AG04450 (cell line): ENCODE measurements at regions of chr1 and their contacts with region 1.

Region 1: GRCh38 chr1:78114034-78114956 is 68.5 kb downstream of the GIPC2 start:
- DNase-seq: peak; percentile 53
- H3K4me3 ChIP-seq: no peak overlapping the region
- H3K27ac ChIP-seq: no peak overlapping the region
- H3K27me3 ChIP-seq: no peaks in the 10 kb centered on the region
- CTCF ChIP-seq: peak; percentile 87

Region 2: DNA sequence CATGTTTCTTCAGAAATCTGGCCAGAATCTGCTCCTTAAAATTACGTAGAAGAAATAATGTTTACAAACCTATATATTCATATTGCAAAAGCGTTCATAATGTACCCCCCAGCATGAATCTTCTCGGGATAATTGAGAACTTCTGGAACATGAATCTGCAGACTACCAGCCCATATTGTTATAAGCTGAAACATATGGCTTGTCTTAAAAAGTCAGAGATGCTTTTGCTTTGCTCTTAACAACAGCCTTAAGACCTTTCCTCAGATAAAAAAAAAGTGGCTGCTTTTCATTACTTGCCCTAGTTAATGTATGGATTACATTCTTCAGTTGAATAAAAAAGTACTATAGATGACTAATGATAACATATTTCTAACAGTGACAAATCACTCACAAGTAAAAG is 416.9 kb before region 1 on chr1:
- CTCF ChIA-PET with region 1: no interaction called
- POLR2A ChIA-PET with region 1: no interaction called
- DNase-seq: no peak
- H3K4me3 ChIP-seq: no peak overlapping the region
- H3K27ac ChIP-seq: no peak overlapping the region
- H3K27me3 ChIP-seq: no peaks in the 10 kb centered on the region
- CTCF ChIP-seq: no peak

Region 3: DNA sequence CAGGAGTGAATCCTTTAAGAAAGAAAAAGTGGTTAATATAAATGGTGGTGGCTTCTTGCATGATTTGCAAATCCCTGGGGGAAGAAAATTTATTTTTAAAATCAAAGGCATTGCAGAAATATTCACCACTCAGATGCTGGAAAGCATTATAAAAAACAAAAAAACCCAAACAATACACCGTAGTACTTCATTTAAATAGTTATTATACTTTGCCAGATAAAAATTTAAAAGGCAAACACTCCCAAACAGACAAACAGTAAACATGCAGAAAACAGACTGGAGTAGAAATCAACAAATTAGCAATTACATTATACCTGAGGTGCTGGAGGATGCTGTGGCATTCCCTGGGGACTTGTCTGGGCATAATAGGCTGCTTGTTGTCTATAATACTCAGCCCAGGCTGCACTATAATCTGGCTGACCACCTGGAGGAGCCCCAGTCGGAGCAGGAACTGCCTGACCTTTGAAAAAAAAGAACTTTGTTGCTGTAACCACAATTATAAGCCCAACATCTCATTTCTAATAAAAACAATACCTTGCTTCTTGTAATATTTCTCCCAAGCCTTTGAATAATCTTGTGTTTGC is 165.4 kb before region 1 on chr1:
- CTCF ChIA-PET with region 1: interaction called, 20 read pairs
- POLR2A ChIA-PET with region 1: no interaction called
- DNase-seq: no peak
- H3K4me3 ChIP-seq: no peak overlapping the region
- H3K27ac ChIP-seq: no peak overlapping the region
- H3K27me3 ChIP-seq: no peaks in the 10 kb centered on the region
- CTCF ChIP-seq: peak; percentile 47

Region 4: DNA sequence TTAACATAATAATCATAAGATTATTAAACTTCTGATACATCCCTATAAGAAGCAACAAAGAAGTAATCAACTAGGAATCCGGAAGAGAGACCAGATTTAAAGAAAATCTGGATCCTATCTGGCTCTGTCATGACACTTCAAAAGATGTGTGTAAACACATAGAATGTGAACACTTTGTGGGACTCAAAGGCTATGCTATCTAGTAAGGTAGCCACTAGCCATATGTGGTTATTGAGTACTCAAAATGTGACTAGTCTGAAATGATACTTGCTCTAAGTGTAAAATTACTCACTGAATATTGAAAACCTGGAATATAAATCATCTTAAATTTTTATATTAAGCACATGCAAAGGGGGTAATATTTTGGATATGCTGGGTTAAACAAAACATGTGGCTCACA is 144.1 kb before region 1 on chr1:
- CTCF ChIA-PET with region 1: interaction called, 23 read pairs
- POLR2A ChIA-PET with region 1: no interaction called
- DNase-seq: no peak
- H3K4me3 ChIP-seq: no peak overlapping the region
- H3K27ac ChIP-seq: no peak overlapping the region
- H3K27me3 ChIP-seq: no peaks in the 10 kb centered on the region
- CTCF ChIP-seq: no peak

Region 5: GRCh38 chr1:77978969-77979876 is 135.1 kb before region 1 on chr1 and contains the start of gene FUBP1:
- CTCF ChIA-PET with region 1: interaction called, 36 read pairs
- POLR2A ChIA-PET with region 1: interaction called, 7 read pairs
- DNase-seq: peak; percentile 99
- H3K4me3 ChIP-seq: peak within 1 kb of the TSS; percentile 77
- H3K27ac ChIP-seq: peak within 1 kb of the TSS; percentile 97
- H3K27me3 ChIP-seq: no peaks in the 10 kb centered on the region
- CTCF ChIP-seq: peak; percentile 74
- polyA plus RNA-seq, gene FUBP1: 123 and 142 TPM in 2 replicates

Region 6: GRCh38 chr1:78004719-78005447 is 109.4 kb before region 1 on chr1 and contains the start of gene DNAJB4:
- CTCF ChIA-PET with region 1: interaction called, 40 read pairs
- POLR2A ChIA-PET with region 1: interaction called, 15 read pairs
- DNase-seq: peak; percentile 96
- H3K4me3 ChIP-seq: peak within 1 kb of the TSS; percentile 74
- H3K27ac ChIP-seq: peak within 1 kb of the TSS; percentile 53
- H3K27me3 ChIP-seq: no peaks in the 10 kb centered on the region
- CTCF ChIP-seq: no peak
- polyA plus RNA-seq, gene DNAJB4: 35.1 and 51.6 TPM in 2 replicates

Region 7: DNA sequence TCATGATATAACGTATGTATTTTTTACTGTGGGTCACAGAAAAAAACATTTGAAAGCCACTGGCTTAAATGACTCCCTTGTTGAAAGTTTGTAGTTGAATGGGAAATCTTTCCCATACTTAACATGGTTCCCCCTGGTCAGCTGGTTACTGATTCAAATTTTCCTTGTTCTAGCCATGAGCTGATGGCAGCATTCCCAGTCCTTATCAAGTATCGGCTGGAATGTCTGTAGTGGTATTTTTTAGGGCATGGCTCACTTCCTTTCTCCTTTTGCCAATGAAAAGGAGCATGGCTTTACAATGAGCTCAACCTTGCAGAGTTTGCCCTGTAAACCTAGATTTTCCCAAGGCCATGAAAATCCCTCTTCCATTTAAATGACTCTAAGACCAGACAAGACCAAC is 12.8 kb before region 1 on chr1:
- CTCF ChIA-PET with region 1: interaction called, 64 read pairs
- POLR2A ChIA-PET with region 1: no interaction called
- DNase-seq: peak; percentile 86
- H3K4me3 ChIP-seq: no peak overlapping the region
- H3K27ac ChIP-seq: peak overlapping the region; percentile 80
- H3K27me3 ChIP-seq: no peaks in the 10 kb centered on the region
- CTCF ChIP-seq: no peak

Region 8: GRCh38 chr1:78184460-78185072 is 70.3 kb after region 1 on chr1:
- CTCF ChIA-PET with region 1: no interaction called
- POLR2A ChIA-PET with region 1: no interaction called
- DNase-seq: no peak
- H3K4me3 ChIP-seq: no peak overlapping the region
- H3K27ac ChIP-seq: no peak overlapping the region
- H3K27me3 ChIP-seq: no peaks in the 10 kb centered on the region
- CTCF ChIP-seq: no peak